CD8-positive, alpha-beta memory T cell (primary cell): ENCODE measurements at regions of chr18 and their contacts with region 1.

Region 1: DNA sequence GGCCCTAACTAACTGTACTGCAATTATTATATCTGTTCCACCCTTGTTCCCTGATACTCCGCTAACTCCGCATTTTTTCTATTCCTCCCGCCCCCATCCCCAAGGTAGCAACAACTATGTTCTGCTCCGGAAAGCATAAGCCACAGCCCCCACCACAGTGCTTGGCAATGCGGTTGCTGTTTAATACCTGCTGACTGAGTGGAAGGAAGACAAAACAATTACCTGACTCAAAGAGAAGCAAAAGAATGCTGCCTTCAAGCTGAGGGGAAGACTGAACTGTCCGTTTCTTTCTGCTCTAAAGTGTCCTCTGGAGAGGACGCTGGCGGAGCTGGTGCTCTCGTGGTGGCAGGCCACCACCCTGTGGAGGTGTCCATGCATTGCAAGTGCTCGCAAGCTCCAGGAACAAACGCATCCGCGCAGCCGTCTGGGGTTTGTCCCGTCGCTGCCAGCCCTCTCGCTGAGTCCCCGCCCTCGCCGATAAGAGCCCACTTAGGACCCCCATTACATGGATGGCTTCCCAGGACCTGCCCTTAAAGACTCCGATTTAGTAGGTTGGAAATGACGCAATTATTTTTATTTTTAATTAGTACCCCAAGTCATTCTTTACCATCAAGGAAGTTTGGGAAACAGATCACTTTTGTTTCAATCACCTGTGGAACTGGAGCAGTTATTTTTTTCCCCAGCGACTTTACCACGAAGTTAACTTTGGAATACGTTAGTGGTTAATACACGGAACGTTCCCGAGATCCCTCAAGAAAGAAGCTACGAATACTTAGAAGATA is 1.6 kb upstream of the MYL12A start:
- DNase-seq: peak; percentile 62 to 83 (median 69)
- H3K4me3 ChIP-seq: peak overlapping the region; percentile 96
- H3K4me3 Mint-ChIP-seq: peak overlapping the region; percentile 92 to 98 (median 94)
- H3K27ac ChIP-seq: peak overlapping the region; percentile 96
- H3K27ac Mint-ChIP-seq: peak overlapping the region; percentile 91 to 98 (median 97)
- H3K4me1 ChIP-seq: peaks cover 23% of the 10 kb centered on the region
- H3K4me1 Mint-ChIP-seq: peaks cover 33 to 53% (median 45%) of the 10 kb centered on the region in 3 donors
- H3K27me3 ChIP-seq: no peaks in the 10 kb centered on the region
- H3K27me3 Mint-ChIP-seq: peaks cover 0 to 2% of the 10 kb centered on the region in 2 donors

Region 2: DNA sequence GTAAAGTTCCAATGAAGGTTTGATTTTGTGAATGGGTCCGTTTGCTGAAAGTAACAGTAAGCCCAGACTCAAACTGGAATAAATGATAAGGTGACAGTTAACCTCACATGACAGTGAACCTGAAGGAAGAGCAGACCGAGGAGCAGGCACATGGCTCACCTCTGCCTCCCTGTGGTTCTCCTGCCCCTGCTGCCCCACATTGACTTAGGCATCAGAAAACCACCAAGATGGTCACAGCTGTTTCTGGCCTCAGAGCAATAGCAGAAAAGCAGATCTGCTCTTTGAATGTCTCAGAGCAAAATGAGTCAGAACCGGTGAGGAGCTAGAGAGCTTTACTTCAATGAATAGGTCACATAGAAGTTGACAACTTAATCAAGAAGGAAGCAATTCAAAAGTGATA is 1162.4 kb before region 1 on chr18:
- CTCF ChIA-PET with region 1: no interaction called
- POLR2A ChIA-PET with region 1: no interaction called
- DNase-seq: no peak
- H3K4me3 ChIP-seq: no peak overlapping the region
- H3K4me3 Mint-ChIP-seq: no peak overlapping the region
- H3K27ac ChIP-seq: no peak overlapping the region
- H3K27ac Mint-ChIP-seq: no peak overlapping the region
- H3K4me1 ChIP-seq: no peaks in the 10 kb centered on the region
- H3K4me1 Mint-ChIP-seq: no peaks in the 10 kb centered on the region
- H3K27me3 ChIP-seq: no peaks in the 10 kb centered on the region
- H3K27me3 Mint-ChIP-seq: no peaks in the 10 kb centered on the region

Region 3: DNA sequence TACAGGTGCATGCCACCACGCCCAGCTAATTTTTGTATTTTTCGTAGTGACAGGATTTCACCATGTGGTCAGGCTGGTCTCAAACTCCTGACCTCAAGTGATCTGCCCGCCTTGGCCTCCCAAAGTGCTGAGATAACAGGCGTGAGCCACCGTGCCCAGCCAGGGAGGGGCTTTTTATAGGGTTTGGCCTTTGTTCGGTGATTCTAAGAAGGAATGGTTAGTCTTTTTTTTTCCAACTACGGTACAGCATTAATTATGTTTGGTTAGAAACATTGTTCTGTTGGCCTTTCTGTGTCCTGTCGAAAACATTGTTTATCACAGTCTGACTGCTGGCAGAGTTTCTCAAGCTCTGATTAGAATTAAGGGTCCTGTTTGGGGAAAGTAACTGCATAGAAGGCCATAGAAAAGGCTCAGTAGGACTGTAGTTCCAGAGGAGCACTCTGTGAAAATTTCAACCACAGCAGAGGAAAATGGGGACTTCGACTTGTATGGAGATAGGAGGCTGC is 609.9 kb before region 1 on chr18:
- CTCF ChIA-PET with region 1: no interaction called
- POLR2A ChIA-PET with region 1: interaction called, 18 read pairs
- DNase-seq: no peak
- H3K4me3 ChIP-seq: peak overlapping the region; percentile 51
- H3K4me3 Mint-ChIP-seq: peak overlapping the region; percentile 81 to 88 (median 86)
- H3K27ac ChIP-seq: peak overlapping the region; percentile 82
- H3K27ac Mint-ChIP-seq: peak overlapping the region; percentile 97 to 99 (median 98)
- H3K4me1 ChIP-seq: peaks cover 68% of the 10 kb centered on the region
- H3K4me1 Mint-ChIP-seq: peaks cover 93 to 100% (median 95%) of the 10 kb centered on the region in 3 donors
- H3K27me3 ChIP-seq: no peaks in the 10 kb centered on the region
- H3K27me3 Mint-ChIP-seq: no peaks in the 10 kb centered on the region

Region 4: DNA sequence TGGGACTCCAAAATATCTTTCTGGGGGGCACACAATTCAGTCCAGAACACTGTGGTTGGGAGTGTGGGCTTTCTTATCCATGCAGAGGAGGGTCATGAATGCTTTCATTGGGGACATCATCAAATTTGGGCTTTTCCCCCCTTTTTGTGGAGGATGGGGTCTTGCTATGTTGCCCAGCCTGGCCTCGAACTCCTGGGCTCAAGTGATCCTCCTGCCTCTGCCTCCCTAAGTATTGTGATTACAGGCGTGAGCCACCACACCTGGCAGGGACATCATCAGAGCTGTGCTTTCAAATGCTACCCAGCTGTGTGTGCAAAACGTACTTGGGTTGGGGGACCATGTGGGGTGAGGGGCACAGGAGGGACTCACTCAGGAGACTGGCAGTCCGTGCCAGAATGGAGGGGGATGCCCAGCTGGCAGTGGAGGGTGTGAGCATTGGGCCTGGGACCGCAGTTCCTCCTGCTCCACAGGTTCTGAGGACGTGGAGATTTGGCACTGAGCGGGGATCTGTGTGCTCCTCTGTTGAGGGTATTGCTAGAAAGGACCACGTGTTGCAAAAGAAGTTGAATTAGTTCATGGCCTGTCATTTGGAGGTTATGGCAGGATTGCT is 374.8 kb before region 1 on chr18:
- CTCF ChIA-PET with region 1: no interaction called
- POLR2A ChIA-PET with region 1: no interaction called
- DNase-seq: no peak
- H3K4me3 ChIP-seq: no peak overlapping the region
- H3K4me3 Mint-ChIP-seq: no peak overlapping the region
- H3K27ac ChIP-seq: no peak overlapping the region
- H3K27ac Mint-ChIP-seq: no peak overlapping the region
- H3K4me1 ChIP-seq: no peaks in the 10 kb centered on the region
- H3K4me1 Mint-ChIP-seq: no peaks in the 10 kb centered on the region
- H3K27me3 ChIP-seq: no peaks in the 10 kb centered on the region
- H3K27me3 Mint-ChIP-seq: peaks cover 5 to 22% of the 10 kb centered on the region in 2 donors

Region 5: GRCh38 chr18:3151399-3152264 is 94.4 kb before region 1 on chr18:
- CTCF ChIA-PET with region 1: interaction called, 23 read pairs
- POLR2A ChIA-PET with region 1: interaction called, 3 read pairs
- DNase-seq: peak in 2 of 5 donors; percentile 19 to 37
- H3K4me3 ChIP-seq: no peak overlapping the region
- H3K4me3 Mint-ChIP-seq: no peak overlapping the region
- H3K27ac ChIP-seq: no peak overlapping the region
- H3K27ac Mint-ChIP-seq: no peak overlapping the region
- H3K4me1 ChIP-seq: no peaks in the 10 kb centered on the region
- H3K4me1 Mint-ChIP-seq: peaks cover 6 to 13% (median 9%) of the 10 kb centered on the region in 3 donors
- H3K27me3 ChIP-seq: no peaks in the 10 kb centered on the region
- H3K27me3 Mint-ChIP-seq: no peaks in the 10 kb centered on the region

Region 6: GRCh38 chr18:3194947-3195612 is 51.0 kb before region 1 on chr18:
- CTCF ChIA-PET with region 1: no interaction called
- POLR2A ChIA-PET with region 1: no interaction called
- DNase-seq: no peak
- H3K4me3 ChIP-seq: no peak overlapping the region
- H3K4me3 Mint-ChIP-seq: no peak overlapping the region
- H3K27ac ChIP-seq: no peak overlapping the region
- H3K27ac Mint-ChIP-seq: no peak overlapping the region
- H3K4me1 ChIP-seq: no peaks in the 10 kb centered on the region
- H3K4me1 Mint-ChIP-seq: peaks cover 0 to 2% (median 0%) of the 10 kb centered on the region in 3 donors
- H3K27me3 ChIP-seq: no peaks in the 10 kb centered on the region
- H3K27me3 Mint-ChIP-seq: peaks cover 0 to 10% of the 10 kb centered on the region in 2 donors

Region 7: DNA sequence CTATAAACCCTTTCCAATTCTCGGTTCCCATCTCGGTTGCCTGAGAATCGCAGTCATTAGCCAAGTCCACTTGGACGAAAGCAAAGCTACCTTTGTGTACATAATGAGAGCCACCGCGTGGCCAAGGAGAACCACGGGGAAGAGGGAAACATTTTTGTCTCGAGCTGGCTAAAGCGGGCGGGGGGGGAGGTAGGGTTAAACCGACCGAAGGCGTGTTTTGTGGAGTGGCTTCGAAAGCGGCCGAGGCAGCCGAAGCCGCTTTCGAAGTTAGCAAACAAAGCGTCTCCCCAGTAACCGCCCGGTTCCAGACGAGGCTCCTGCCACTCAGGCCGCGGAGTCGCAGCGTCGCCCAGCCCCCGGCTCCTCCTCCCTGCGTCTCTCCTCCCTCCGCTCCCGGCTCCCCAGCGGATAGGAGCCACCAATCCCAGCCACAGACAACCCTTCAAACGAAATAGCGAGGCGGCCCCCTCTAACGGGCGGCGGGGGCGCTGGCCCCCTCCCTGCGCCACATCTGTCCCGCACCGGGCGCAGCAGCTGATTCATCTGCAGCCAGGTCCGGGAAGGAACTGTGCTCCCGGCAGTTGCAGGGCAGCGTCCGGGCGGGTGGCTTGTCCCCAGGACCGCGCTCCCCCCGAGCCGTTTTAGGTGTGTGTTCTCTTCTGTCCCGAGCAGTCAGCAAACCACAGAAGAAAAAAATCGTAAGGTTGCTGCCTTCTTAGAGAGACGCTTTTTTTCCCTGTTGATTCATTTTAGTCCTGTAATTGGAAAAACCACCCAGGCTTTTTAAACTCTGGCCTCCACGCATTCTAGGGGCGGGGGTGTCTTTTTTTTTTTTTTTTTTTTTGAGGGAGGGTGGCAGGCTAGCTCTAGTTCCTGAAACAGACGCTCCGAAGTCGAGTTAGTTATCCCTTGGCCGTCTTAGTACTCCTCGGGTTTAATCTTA is 202.1 kb after region 1 on chr18:
- CTCF ChIA-PET with region 1: no interaction called
- POLR2A ChIA-PET with region 1: interaction called, 13 read pairs
- DNase-seq: peak; percentile 77 to 94 (median 89)
- H3K4me3 ChIP-seq: peak overlapping the region; percentile 96
- H3K4me3 Mint-ChIP-seq: peak overlapping the region; percentile 85 to 98 (median 96)
- H3K27ac ChIP-seq: peak overlapping the region; percentile 94
- H3K27ac Mint-ChIP-seq: peak overlapping the region; percentile 93 to 100 (median 100)
- H3K4me1 ChIP-seq: peaks cover 16% of the 10 kb centered on the region
- H3K4me1 Mint-ChIP-seq: peaks cover 22 to 33% (median 31%) of the 10 kb centered on the region in 3 donors
- H3K27me3 ChIP-seq: no peaks in the 10 kb centered on the region
- H3K27me3 Mint-ChIP-seq: peaks cover 0 to 19% of the 10 kb centered on the region in 2 donors

Region 8: GRCh38 chr18:3593904-3594661 is 348.0 kb after region 1 on chr18:
- CTCF ChIA-PET with region 1: interaction called, 5 read pairs
- POLR2A ChIA-PET with region 1: interaction called, 18 read pairs
- DNase-seq: peak; percentile 77 to 95 (median 93)
- H3K4me3 ChIP-seq: peak overlapping the region; percentile 74
- H3K4me3 Mint-ChIP-seq: peak overlapping the region; percentile 94 to 98 (median 95)
- H3K27ac ChIP-seq: peak overlapping the region; percentile 95
- H3K27ac Mint-ChIP-seq: peak overlapping the region; percentile 97 to 100 (median 99)
- H3K4me1 ChIP-seq: peaks cover 41% of the 10 kb centered on the region
- H3K4me1 Mint-ChIP-seq: peaks cover 49 to 64% (median 54%) of the 10 kb centered on the region in 3 donors
- H3K27me3 ChIP-seq: no peaks in the 10 kb centered on the region
- H3K27me3 Mint-ChIP-seq: no peaks in the 10 kb centered on the region